GM12878 (cell line): ENCODE measurements at regions of chr17 and their contacts with region 1.

Region 1: DNA sequence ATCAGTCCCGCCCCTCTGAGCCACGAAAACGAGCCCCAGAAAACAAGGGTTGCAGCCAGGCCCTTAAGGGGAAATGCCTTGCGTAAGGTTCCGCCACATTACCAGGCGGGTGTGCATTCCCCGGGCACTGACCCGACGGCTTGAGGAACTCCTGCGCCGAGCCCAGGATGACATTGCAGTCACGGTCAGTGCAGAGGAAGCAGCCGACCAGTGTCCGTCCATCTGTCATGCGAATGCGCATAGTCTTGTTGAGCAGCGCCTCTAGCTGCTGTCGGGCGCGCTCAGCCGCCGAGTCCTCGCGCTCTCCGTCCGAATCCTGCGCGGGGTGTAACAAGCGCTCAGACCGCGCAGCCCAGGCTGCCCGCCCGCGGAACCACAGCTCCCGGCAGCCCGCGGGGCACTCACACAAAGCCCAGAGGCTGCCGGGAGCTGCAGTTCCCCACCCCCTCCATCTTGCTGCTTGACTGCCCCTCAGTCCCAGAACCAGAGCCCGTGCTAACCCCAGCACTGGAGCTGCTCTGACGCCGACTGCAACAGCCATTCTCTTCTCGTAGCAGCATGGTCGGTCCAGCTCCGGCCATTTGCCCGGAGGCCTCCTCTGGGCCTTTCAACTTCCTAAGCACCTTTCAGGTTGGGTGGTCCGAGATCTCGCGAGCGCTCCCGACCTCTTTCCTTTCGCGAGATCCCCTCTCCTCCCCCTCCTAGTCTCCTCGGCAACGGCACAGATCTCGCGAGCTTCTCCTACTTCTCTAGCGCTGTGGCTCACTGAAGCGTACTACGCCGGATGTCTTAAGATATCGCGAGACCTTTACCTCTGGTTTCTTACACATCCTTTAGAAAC is at the start of gene NAA38:
- DNase-seq: peak; percentile 100
- ATAC-seq: peak; percentile 91
- H3K4me3 ChIP-seq: peak within 1 kb of the TSS; percentile 96
- H3K27ac ChIP-seq: peak within 1 kb of the TSS; percentile 96
- H3K4me1 ChIP-seq: peaks cover 18% of the 10 kb centered on the region
- H3K27me3 ChIP-seq: no peaks in the 10 kb centered on the region
- CTCF ChIP-seq: peak in 2 of 3 experiments; percentile 48 to 69; a peak in 5 of 6 replicates
- EP300 ChIP-seq: no peak; a peak in 1 of 4 replicates
- POLR2A ChIP-seq: peak; percentile 76
- RAD21 ChIP-seq: no peak
- polyA plus RNA-seq, gene NAA38: 206 to 231 TPM

Region 2: DNA sequence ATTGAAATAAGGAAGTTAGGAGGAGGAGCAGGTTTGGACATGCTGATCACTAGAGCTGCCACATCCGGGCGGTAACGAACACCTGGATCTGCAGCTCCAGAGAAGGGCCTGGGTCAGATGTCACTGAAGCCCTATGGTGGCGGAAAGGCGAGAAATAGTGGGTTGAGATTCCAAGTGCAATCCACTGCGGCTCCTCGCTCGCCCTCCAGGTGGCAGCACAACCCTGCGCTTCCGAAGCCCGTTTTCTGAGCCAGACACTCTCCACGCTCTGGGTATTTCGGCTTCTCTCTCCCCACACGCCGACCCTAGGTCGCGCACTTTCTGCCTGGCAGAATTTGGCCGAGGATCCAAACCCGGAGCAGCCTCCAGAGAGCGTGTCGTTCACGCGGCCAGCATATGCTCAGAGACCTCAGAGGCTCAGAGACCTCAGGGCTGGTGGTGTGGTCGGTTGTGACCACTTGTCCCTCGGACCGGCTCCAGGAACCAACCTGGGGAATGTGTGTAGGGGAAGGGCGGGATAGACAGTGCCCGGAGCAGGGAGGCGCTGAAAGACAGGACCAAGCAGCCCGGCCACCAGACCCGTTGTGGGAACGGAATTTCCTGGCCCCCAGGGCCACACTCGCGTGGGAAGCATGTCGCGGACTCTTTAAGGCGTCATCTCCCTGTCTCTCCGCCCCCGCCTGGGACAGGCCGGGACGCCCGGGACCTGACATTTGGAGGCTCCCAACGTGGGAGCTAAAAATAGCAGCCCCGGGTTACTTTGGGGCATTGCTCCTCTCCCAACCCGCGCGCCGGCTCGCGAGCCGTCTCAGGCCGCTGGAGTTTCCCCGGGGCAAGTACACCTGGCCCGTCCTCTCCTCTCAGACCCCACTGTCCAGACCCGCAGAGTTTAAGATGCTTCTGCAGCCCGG is 576.3 kb before region 1 on chr17:
- CTCF ChIA-PET with region 1: no interaction called
- POLR2A ChIA-PET with region 1: no interaction called
- RAD21 ChIA-PET with region 1: no interaction called
- SMC1A ChIA-PET with region 1: no interaction called
- in situ Hi-C with region 1: no loop called
- intact Hi-C with region 1: no loop called
- DNase-seq: peak; percentile 40
- ATAC-seq: peak; percentile 90
- H3K4me3 ChIP-seq: peak overlapping the region; percentile 56
- H3K27ac ChIP-seq: no peak overlapping the region
- H3K4me1 ChIP-seq: peaks cover 8% of the 10 kb centered on the region
- H3K27me3 ChIP-seq: no peaks in the 10 kb centered on the region; a peak in 1 of 4 replicates
- CTCF ChIP-seq: peak; percentile 96 to 98 (median 98); a peak in 5 of 6 replicates
- EP300 ChIP-seq: no peak
- POLR2A ChIP-seq: 0 out of 2 replicates have a peak, but pooled peaks have one; percentile 28
- RAD21 ChIP-seq: peak; percentile 90

Region 3: GRCh38 chr17:7825206-7825990 is 31.7 kb before region 1 on chr17:
- CTCF ChIA-PET with region 1: interaction called, 18 read pairs
- POLR2A ChIA-PET with region 1: no interaction called
- RAD21 ChIA-PET with region 1: interaction called, 5 read pairs
- SMC1A ChIA-PET with region 1: interaction called, 7 read pairs
- in situ Hi-C with region 1: no loop called
- intact Hi-C with region 1: no loop called
- DNase-seq: no peak
- ATAC-seq: 0 out of 3 replicates have a peak, but pooled peaks have one; percentile 28
- H3K4me3 ChIP-seq: no peak overlapping the region
- H3K27ac ChIP-seq: no peak overlapping the region
- H3K4me1 ChIP-seq: no peaks in the 10 kb centered on the region
- H3K27me3 ChIP-seq: no peaks in the 10 kb centered on the region; a peak in 1 of 4 replicates
- CTCF ChIP-seq: no peak; a peak in 1 of 6 replicates
- EP300 ChIP-seq: no peak
- POLR2A ChIP-seq: no peak
- RAD21 ChIP-seq: no peak

Region 4: DNA sequence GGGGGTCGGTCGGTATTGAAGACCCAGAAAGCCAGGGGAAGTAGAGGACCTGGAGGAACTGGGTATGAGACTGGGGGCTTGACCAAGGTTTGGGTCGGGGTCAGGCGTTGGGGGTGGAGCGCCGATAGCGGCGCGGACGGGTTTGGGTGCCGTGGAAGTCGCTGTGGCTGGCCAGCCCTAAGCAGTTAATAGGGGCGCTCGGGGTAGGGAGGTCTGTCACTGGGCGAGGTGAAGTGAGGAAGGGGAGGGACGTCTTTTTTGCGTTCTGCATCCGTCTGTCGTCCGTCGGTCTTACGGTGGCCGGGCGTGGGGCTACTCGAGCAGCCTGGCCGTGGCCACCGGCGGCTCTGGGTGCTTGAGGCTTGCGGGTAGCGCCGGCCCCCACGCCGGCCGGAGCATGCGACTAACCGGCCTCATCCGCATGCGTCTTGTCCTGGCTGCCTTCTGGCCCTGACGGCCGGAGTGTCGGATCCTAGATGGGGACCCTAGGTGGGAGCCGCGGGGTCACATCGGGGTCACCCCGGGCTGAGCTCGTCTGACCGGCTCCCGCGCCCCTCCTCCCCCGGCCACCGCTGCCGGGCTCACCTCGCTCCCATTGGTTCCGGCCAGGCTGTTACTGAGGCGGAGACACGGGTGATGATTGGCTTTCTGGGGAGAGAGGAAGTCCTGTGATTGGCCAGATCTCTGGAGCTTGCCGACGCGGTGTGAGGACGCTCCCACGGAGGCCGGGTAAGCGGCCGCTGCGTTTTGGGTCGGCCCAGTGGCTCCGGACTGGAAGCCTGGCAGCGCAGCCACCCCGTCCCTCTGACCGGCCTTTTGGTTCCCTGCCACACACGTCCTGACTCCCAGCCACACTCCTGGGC is 12.6 kb before region 1 on chr17:
- CTCF ChIA-PET with region 1: interaction called, 11 read pairs
- POLR2A ChIA-PET with region 1: interaction called, 6 read pairs
- RAD21 ChIA-PET with region 1: interaction called, 16 read pairs
- SMC1A ChIA-PET with region 1: interaction called, 3 read pairs
- in situ Hi-C with region 1: no loop called
- intact Hi-C with region 1: loop called (anchors 2 kb)
- DNase-seq: peak; percentile 68
- ATAC-seq: peak; percentile 73
- H3K4me3 ChIP-seq: peak overlapping the region; percentile 92
- H3K27ac ChIP-seq: peak overlapping the region; percentile 95
- H3K4me1 ChIP-seq: peaks cover 26% of the 10 kb centered on the region
- H3K27me3 ChIP-seq: no peaks in the 10 kb centered on the region
- CTCF ChIP-seq: no peak
- EP300 ChIP-seq: peak; percentile 14 to 21; a peak in 1 of 4 replicates
- POLR2A ChIP-seq: peak; percentile 68
- RAD21 ChIP-seq: no peak

Region 5: GRCh38 chr17:7885367-7886226 is 28.5 kb after region 1 on chr17:
- CTCF ChIA-PET with region 1: interaction called, 75 read pairs
- POLR2A ChIA-PET with region 1: interaction called, 11 read pairs
- RAD21 ChIA-PET with region 1: interaction called, 8 read pairs
- SMC1A ChIA-PET with region 1: interaction called, 5 read pairs
- in situ Hi-C with region 1: no loop called
- intact Hi-C with region 1: no loop called
- DNase-seq: no peak
- ATAC-seq: peak; percentile 51
- H3K4me3 ChIP-seq: peak overlapping the region; percentile 88
- H3K27ac ChIP-seq: peak overlapping the region; percentile 91
- H3K4me1 ChIP-seq: peaks cover 14% of the 10 kb centered on the region
- H3K27me3 ChIP-seq: no peaks in the 10 kb centered on the region
- CTCF ChIP-seq: no peak
- EP300 ChIP-seq: no peak
- POLR2A ChIP-seq: peak; percentile 67
- RAD21 ChIP-seq: no peak

Region 6: DNA sequence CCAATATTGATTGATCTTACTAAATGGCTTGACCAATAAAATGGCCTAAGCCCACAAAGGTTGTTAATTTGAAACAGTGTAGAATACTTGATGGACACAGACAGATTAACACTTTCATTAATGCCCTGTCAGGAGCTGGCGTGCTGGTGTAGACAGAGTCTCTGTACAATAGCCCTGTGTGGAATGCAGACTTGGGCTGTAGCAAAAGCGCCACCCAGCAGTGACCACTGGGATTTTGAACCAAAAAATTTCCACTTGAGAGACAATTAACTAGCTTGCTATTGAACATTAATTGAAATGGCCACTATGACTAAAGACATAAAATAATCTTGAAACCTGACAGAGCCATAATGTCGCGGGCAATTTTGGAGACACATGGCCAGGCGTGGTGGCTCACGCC is 125.6 kb after region 1 on chr17:
- CTCF ChIA-PET with region 1: interaction called, 308 read pairs
- POLR2A ChIA-PET with region 1: no interaction called
- RAD21 ChIA-PET with region 1: interaction called, 65 read pairs
- SMC1A ChIA-PET with region 1: interaction called, 41 read pairs
- in situ Hi-C with region 1: loop called (anchors 5 kb)
- intact Hi-C with region 1: no loop called
- DNase-seq: no peak
- ATAC-seq: no peak
- H3K4me3 ChIP-seq: no peak overlapping the region
- H3K27ac ChIP-seq: no peak overlapping the region
- H3K4me1 ChIP-seq: no peaks in the 10 kb centered on the region
- H3K27me3 ChIP-seq: peaks cover 0 to 5% of the 10 kb centered on the region in 2 experiments; a peak in 1 of 4 replicates
- CTCF ChIP-seq: peak in 2 of 3 experiments; percentile 9 to 40; a peak in 2 of 6 replicates
- EP300 ChIP-seq: no peak
- POLR2A ChIP-seq: no peak
- RAD21 ChIP-seq: peak; percentile 41; the same call in 1 of the 2 replicates